ENCODE measurements at regions of chr10 and their contacts with region 1.

Region 1: GRCh38 chr10:97792141-97792721 is 20.4 kb upstream of the SFRP5 start:
- DNase-seq: peak; percentile 82
- H3K4me3 Mint-ChIP-seq: no peak overlapping the region
- H3K27ac Mint-ChIP-seq: peak overlapping the region; percentile 28
- H3K4me1 Mint-ChIP-seq: peaks cover 38% of the 10 kb centered on the region
- H3K27me3 Mint-ChIP-seq: peaks cover 37% of the 10 kb centered on the region

Region 2: GRCh38 chr10:97766996-97767924 is 25.0 kb before region 1 on chr10:
- CTCF ChIA-PET with region 1: interaction called, 10 read pairs
- DNase-seq: no peak
- H3K4me3 Mint-ChIP-seq: no peak overlapping the region
- H3K27ac Mint-ChIP-seq: no peak overlapping the region
- H3K4me1 Mint-ChIP-seq: peaks cover 9% of the 10 kb centered on the region
- H3K27me3 Mint-ChIP-seq: peaks cover 44% of the 10 kb centered on the region

Region 3: GRCh38 chr10:97780841-97781617 is 11.2 kb before region 1 on chr10:
- CTCF ChIA-PET with region 1: interaction called, 21 read pairs
- DNase-seq: no peak
- H3K4me3 Mint-ChIP-seq: no peak overlapping the region
- H3K27ac Mint-ChIP-seq: peak overlapping the region; percentile 86
- H3K4me1 Mint-ChIP-seq: peaks cover 31% of the 10 kb centered on the region
- H3K27me3 Mint-ChIP-seq: peaks cover 18% of the 10 kb centered on the region

Region 4: GRCh38 chr10:97849687-97850402 is 57.6 kb after region 1 on chr10 and contains the start of gene GOLGA7B:
- CTCF ChIA-PET with region 1: interaction called, 15 read pairs
- DNase-seq: peak; percentile 83
- H3K4me3 Mint-ChIP-seq: peak within 1 kb of the TSS; percentile 90
- H3K27ac Mint-ChIP-seq: peak within 1 kb of the TSS; percentile 91
- H3K4me1 Mint-ChIP-seq: peaks cover 50% of the 10 kb centered on the region
- H3K27me3 Mint-ChIP-seq: peaks cover 9% of the 10 kb centered on the region

Region 5: DNA sequence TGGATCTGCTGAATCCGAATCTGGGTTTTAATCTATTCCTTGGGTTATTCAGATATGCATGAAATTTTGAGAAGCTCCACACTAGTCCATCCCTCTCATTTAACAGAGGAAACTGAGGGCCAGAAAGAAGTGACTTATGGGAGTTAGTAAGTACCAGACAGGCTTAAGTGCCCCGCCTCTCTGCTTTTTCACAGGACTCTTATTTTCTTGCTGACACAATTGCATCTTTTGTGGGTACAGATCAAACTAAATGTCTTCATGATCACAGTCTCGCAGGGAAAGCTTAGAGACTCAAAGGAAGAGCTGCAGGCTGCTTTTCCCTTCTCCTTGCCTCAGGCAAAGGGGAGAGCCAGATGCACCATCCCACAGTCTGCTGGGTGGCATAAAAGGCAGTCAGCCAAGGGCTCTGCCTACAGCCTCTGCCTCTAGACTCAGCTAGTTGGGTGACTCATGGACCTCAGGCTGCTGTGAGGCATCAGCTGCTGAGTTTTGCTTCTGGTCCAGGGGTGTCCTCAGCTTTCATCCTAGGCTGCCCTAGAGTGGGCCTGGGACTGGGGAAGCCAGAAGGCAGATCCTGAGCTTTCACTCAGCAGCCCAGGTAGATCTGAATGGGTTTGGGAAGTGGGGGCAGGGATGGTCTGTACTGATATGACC is 69.0 kb after region 1 on chr10:
- CTCF ChIA-PET with region 1: interaction called, 28 read pairs
- DNase-seq: no peak
- H3K4me3 Mint-ChIP-seq: no peak overlapping the region
- H3K27ac Mint-ChIP-seq: no peak overlapping the region
- H3K4me1 Mint-ChIP-seq: peaks cover 28% of the 10 kb centered on the region
- H3K27me3 Mint-ChIP-seq: peaks cover 5% of the 10 kb centered on the region

Region 6: DNA sequence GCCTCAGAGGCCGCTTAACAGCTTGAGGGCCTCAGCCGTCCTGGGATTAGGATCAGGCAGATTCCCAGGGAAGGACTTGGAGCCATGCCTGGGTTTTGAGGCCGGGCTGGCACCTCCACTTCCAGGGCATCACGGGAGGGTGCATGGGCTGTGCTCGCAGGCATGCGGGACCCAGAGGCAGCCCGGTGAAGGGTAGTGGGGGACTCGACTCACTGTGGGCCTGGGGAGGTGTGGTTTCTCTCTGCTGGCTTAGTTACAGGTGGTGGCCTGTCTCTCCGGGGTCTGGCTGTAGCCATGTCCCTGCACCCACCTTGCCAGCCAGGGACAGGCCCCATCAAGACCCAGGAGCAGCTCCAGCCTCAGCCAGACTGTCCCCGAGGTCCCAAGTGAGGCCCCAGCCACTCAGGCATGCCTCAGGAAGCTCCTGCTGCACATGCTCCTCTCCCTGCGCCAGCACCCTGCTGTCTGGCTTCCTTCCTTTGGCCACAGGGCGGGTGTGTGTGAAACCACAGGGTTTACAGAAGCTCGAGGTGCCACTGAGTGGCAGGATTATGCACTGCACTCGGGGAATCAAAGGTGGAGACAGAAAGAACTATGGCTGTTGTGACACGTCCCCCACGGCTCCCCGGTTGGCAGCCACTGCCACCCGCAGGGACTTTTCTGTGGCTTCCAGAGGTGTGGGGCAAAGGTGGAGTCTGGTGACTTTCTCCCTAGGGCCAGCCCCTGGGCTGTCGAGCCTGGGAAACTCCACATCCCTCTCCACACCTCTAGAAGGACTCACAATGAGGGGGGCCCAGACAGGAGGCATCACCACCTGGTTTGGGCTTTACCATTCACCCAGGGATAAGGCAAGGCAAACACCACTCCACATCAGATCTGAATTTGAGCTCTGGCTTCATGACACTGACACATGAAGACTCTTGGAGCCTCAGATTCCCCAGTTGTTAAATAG is 77.1 kb after region 1 on chr10:
- CTCF ChIA-PET with region 1: interaction called, 265 read pairs
- DNase-seq: peak; percentile 94
- H3K4me3 Mint-ChIP-seq: no peak overlapping the region
- H3K27ac Mint-ChIP-seq: peak overlapping the region; percentile 52
- H3K4me1 Mint-ChIP-seq: peaks cover 19% of the 10 kb centered on the region
- H3K27me3 Mint-ChIP-seq: peaks cover 44% of the 10 kb centered on the region